MCF 10A (cell line): ENCODE measurements at regions of chr17 and their contacts with region 1.

Region 1: GRCh38 chr17:7136266-7136877 is 21.8 kb upstream of the ASGR2 start:
- DNase-seq: peak; percentile 69
- H3K4me3 Mint-ChIP-seq: no peak overlapping the region
- H3K27ac Mint-ChIP-seq: no peak overlapping the region
- H3K4me1 Mint-ChIP-seq: no peaks in the 10 kb centered on the region
- H3K27me3 Mint-ChIP-seq: peaks cover 16% of the 10 kb centered on the region
- CTCF ChIP-seq: peak; percentile 68

Region 2: GRCh38 chr17:7060165-7060891 is 76.0 kb before region 1 on chr17:
- CTCF ChIA-PET with region 1: interaction called, 113 read pairs
- POLR2A ChIA-PET with region 1: no interaction called
- intact Hi-C with region 1: no loop called
- DNase-seq: peak; percentile 90
- H3K4me3 Mint-ChIP-seq: peak overlapping the region; percentile 61
- H3K27ac Mint-ChIP-seq: peak overlapping the region; percentile 92
- H3K4me1 Mint-ChIP-seq: peaks cover 28% of the 10 kb centered on the region
- H3K27me3 Mint-ChIP-seq: no peaks in the 10 kb centered on the region
- CTCF ChIP-seq: no peak

Region 3: DNA sequence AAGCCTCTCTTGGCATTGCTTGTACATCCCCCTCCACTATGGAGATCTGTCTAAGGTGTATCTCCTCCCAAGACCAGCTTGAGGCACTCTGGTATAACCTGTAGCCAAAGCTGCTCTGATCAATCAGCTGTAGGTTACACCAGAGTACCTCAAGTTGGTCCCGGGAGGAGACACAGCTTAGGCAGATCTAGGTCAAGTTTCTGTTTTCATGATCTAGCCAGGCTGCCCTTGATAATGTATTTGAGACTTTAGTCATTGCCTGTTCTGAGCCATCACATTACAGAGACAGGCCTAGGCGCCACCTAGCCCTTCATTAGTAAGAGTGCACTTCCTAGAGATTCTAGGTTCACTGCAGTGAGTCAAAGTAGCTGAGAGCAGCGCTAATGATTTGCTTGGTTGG is 11.4 kb after region 1 on chr17:
- CTCF ChIA-PET with region 1: interaction called, 15 read pairs
- POLR2A ChIA-PET with region 1: no interaction called
- intact Hi-C with region 1: no loop called
- DNase-seq: no peak
- H3K4me3 Mint-ChIP-seq: no peak overlapping the region
- H3K27ac Mint-ChIP-seq: no peak overlapping the region
- H3K4me1 Mint-ChIP-seq: no peaks in the 10 kb centered on the region
- H3K27me3 Mint-ChIP-seq: peaks cover 14% of the 10 kb centered on the region
- CTCF ChIP-seq: no peak

Region 4: GRCh38 chr17:7167832-7168231 is 31.5 kb after region 1 on chr17:
- CTCF ChIA-PET with region 1: interaction called, 17 read pairs
- POLR2A ChIA-PET with region 1: interaction called, 4 read pairs
- intact Hi-C with region 1: no loop called
- DNase-seq: peak; percentile 51
- H3K4me3 Mint-ChIP-seq: no peak overlapping the region
- H3K27ac Mint-ChIP-seq: no peak overlapping the region
- H3K4me1 Mint-ChIP-seq: no peaks in the 10 kb centered on the region
- H3K27me3 Mint-ChIP-seq: no peaks in the 10 kb centered on the region
- CTCF ChIP-seq: no peak

Region 5: DNA sequence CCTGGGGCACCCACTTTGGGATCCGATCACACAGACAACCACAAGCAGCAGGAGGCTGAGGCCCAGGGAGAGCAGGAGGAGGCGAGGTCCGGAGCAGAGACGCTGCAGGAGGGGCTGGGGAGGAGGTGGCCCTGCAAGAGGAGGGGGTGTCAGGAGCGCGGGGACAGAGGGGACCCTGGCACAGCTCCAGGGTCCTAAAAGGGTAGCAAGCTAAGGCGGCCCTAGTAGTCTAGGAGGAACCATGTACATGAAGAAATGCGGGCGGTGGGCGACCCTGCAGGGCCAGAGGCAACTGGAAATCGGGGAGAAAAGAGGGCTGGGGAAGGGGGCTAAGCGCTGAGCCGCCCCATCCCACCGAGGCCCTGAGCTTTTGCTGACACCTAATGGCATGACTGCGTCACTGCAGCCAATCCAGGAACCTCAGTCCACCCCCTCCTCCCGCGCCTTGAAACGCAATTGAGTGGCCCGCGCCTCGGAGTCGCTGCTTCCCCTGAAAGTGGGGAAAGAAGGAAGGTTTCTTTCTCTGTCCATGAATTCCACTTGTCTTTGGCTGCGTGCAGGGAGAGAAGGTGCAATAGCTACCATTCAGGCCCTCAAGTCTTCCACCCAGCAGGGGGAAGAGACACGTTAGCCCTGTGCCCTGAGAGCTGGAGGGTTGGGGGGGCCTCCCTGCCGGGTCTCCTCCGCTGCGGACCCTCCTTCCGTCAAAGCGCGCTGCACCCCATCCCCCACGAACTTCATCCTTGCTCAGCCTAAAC is 41.0 kb after region 1 on chr17:
- CTCF ChIA-PET with region 1: interaction called, 20 read pairs
- POLR2A ChIA-PET with region 1: no interaction called
- intact Hi-C with region 1: loop called (anchors 2 kb)
- DNase-seq: peak; percentile 66
- H3K4me3 Mint-ChIP-seq: peak overlapping the region; percentile 61
- H3K27ac Mint-ChIP-seq: no peak overlapping the region
- H3K4me1 Mint-ChIP-seq: no peaks in the 10 kb centered on the region
- H3K27me3 Mint-ChIP-seq: no peaks in the 10 kb centered on the region
- CTCF ChIP-seq: peak; percentile 88

Region 6: DNA sequence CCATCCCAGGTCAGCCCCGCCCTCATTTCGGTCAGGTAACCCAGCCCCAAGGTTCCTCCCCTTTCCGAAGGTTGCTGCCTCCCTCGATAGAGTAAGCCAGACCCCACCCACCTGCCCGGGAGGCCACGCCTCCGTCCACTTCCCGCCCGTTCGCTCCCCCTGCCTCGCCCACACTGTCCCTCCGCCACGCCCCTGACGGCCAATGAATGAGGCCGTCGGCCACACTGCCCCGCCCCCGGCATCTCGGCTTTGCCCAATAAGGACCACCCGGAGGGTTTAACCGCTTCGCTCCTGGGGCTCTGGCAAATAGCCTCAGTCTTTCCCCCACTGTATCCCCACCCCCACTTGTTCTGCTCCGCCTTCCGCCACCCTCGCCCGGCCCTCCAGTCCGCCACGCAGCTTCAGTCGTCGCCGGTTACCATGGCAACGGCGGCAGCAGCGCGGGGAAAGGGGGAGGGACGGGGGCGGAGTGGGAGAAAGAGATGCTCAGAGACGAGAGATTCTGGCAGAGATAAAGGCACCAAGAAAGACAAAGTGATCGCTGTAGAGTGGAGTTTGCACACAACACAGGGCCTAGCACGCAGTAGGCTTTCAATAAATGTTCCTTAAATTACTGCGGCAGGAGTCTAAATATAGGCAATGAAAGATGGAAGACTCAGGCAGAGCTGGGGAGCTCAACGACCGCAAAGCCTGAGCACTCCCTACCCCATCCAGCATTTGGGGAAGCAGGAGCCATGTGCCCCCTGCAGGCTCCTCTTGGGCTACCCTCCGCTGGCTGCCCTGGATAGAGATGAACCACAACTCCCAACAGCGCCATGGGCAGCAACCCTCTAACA is 78.1 kb after region 1 on chr17:
- CTCF ChIA-PET with region 1: interaction called, 4 read pairs
- POLR2A ChIA-PET with region 1: no interaction called
- intact Hi-C with region 1: loop called (anchors 5 kb)
- DNase-seq: peak; percentile 95
- H3K4me3 Mint-ChIP-seq: peak overlapping the region; percentile 75
- H3K27ac Mint-ChIP-seq: peak overlapping the region; percentile 85
- H3K4me1 Mint-ChIP-seq: peaks cover 26% of the 10 kb centered on the region
- H3K27me3 Mint-ChIP-seq: no peaks in the 10 kb centered on the region
- CTCF ChIP-seq: peak; percentile 27